HEK293 (cell line): ENCODE measurements at regions of chr5 and their contacts with region 1.

Region 1: GRCh38 chr5:61755726-61756222 is 423.7 kb downstream of the ZSWIM6 start:
- H3K4me3 ChIP-seq: no peak overlapping the region
- H3K27ac ChIP-seq: no peak overlapping the region
- H3K4me1 ChIP-seq: no peaks in the 10 kb centered on the region
- CTCF ChIP-seq: no peak

Region 2: GRCh38 chr5:61701877-61702602 is 53.7 kb before region 1 on chr5:
- CTCF ChIA-PET with region 1: no interaction called
- POLR2A ChIA-PET with region 1: no interaction called
- H3K4me3 ChIP-seq: no peak overlapping the region
- H3K27ac ChIP-seq: no peak overlapping the region
- H3K4me1 ChIP-seq: no peaks in the 10 kb centered on the region
- CTCF ChIP-seq: no peak

Region 3: DNA sequence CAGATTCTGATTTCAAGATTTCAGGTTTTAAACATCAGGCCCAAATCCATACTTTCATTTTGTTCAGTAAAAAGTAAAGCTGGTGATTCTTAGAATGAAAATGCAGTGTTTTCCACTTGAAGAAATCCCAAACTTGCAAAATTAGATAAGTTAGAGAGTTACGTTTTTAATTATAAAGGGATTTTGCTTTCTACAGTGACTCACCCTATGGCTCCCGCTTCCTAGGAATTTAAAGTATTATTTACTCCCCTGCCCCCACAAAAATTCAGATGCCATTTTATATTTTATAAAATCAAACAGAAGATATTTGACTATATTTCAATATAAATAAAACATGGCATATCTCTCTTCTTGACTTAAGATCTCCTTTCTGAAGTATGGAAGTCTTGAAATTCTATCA is 20.8 kb before region 1 on chr5:
- CTCF ChIA-PET with region 1: no interaction called
- POLR2A ChIA-PET with region 1: no interaction called
- H3K4me3 ChIP-seq: no peak overlapping the region
- H3K27ac ChIP-seq: no peak overlapping the region
- H3K4me1 ChIP-seq: no peaks in the 10 kb centered on the region
- CTCF ChIP-seq: no peak

Region 4: DNA sequence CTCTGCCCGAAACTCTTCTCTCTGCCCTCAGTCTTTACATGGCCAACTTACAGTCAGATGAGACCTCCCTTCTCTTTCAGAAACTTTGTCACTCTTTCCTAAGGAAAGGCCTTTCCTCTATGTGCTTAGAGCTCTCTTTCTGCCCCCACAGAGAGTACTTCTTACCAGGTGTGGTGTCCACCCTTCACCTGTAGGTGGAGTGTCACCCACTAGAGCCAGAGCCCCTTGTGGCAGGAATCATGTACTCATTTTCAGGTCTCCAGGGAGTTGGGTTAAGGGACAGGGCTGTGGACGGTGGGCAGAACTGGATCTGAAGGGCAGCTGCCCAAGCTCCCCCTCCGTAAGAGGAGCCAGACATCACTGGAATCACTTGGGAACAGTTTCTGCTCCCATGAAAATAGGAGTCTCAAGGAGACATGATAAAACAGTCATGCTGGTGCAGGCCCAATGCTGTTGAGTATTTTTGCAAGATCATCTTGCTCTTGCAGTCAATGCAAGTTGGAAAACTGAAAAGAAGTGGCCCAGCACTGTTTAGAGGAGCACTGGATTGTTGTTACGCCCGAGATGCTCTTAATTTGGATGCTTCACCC is 13.0 kb after region 1 on chr5:
- CTCF ChIA-PET with region 1: interaction called, 12 read pairs
- POLR2A ChIA-PET with region 1: no interaction called
- H3K4me3 ChIP-seq: no peak overlapping the region
- H3K27ac ChIP-seq: no peak overlapping the region
- H3K4me1 ChIP-seq: no peaks in the 10 kb centered on the region
- CTCF ChIP-seq: peak; percentile 35; the same call in 1 of the 2 replicates

Region 5: GRCh38 chr5:62421414-62421813 is 665.6 kb after region 1 on chr5:
- CTCF ChIA-PET with region 1: no interaction called
- POLR2A ChIA-PET with region 1: no interaction called
- H3K4me3 ChIP-seq: no peak overlapping the region
- H3K27ac ChIP-seq: no peak overlapping the region
- H3K4me1 ChIP-seq: peaks cover 2% of the 10 kb centered on the region; the same call in 1 of the 2 replicates
- CTCF ChIP-seq: no peak